Naive thymus-derived CD4-positive, alpha-beta T cell (primary cell): ENCODE measurements at regions of chr3 and their contacts with region 1.

Region 1: DNA sequence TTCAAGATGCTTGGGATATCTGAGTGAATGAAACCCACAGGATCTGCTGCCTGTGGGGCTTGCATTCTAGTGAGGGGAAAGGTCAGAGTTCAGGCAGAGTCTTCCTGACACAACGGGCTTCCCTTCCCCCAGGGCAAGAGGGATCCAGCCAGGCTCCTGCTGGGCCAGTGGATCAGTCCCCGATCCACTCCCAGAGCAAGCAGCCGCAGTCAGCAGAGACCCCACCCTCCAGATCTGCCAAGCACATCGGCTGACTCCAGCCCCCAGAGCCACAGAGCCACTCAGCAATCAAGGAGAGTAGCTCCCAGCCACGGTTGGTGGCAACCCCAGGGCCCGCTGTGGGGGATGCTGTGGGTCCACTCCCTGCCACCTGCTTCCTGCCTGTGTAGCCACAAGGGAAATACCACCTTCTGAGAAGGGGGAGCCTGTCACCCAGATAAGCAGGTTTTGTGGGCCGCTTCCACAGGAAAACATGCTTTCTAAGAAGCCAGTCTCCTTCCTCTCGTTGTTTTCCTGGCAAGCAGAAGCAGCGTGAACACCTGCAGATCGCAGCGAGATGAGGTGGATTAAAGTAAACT is 44.9 kb downstream of the CPN2 start:
- DNase-seq: peak in 8 of 9 donors; percentile 49 to 75 (median 68)
- ATAC-seq: peak; percentile 81
- H3K4me3 ChIP-seq: peak overlapping the region; percentile 43
- H3K4me3 Mint-ChIP-seq: peak overlapping the region; percentile 66 to 82 (median 79)
- H3K27ac ChIP-seq: peak overlapping the region; percentile 60
- H3K27ac Mint-ChIP-seq: peak overlapping the region; percentile 71 to 93 (median 85)
- H3K4me1 ChIP-seq: peaks cover 23 to 27% of the 10 kb centered on the region in 2 donors
- H3K4me1 Mint-ChIP-seq: peaks cover 12 to 65% (median 40%) of the 10 kb centered on the region in 7 donors
- H3K27me3 ChIP-seq: no peaks in the 10 kb centered on the region
- H3K27me3 Mint-ChIP-seq: no peaks in the 10 kb centered on the region

Region 2: GRCh38 chr3:192892981-192893700 is 1413.1 kb before region 1 on chr3:
- CTCF ChIA-PET with region 1: no interaction called
- POLR2A ChIA-PET with region 1: no interaction called
- intact Hi-C with region 1: loop called in 1 of 2 experiments (anchors 5 kb)
- DNase-seq: peak in 8 of 9 donors; percentile 20 to 68 (median 41)
- ATAC-seq: peak; percentile 89
- H3K4me3 ChIP-seq: peak overlapping the region; percentile 29
- H3K4me3 Mint-ChIP-seq: peak overlapping the region; percentile 39 to 87 (median 74)
- H3K27ac ChIP-seq: peak overlapping the region; percentile 73
- H3K27ac Mint-ChIP-seq: peak overlapping the region; percentile 77 to 95 (median 91)
- H3K4me1 ChIP-seq: peaks cover 4 to 21% of the 10 kb centered on the region in 2 donors
- H3K4me1 Mint-ChIP-seq: peaks cover 15 to 91% (median 46%) of the 10 kb centered on the region in 7 donors
- H3K27me3 ChIP-seq: no peaks in the 10 kb centered on the region
- H3K27me3 Mint-ChIP-seq: peaks cover 0 to 20% (median 3%) of the 10 kb centered on the region in 5 donors

Region 3: GRCh38 chr3:193592944-193593667 is 713.1 kb before region 1 on chr3 and contains the start of gene OPA1:
- CTCF ChIA-PET with region 1: no interaction called
- POLR2A ChIA-PET with region 1: no interaction called
- intact Hi-C with region 1: loop called in 1 of 2 experiments (anchors 5 kb)
- DNase-seq: peak; percentile 73 to 91 (median 80)
- ATAC-seq: peak; percentile 96
- H3K4me3 ChIP-seq: peak within 1 kb of the TSS; percentile 78
- H3K4me3 Mint-ChIP-seq: peak within 1 kb of the TSS; percentile 93 to 98 (median 96)
- H3K27ac ChIP-seq: peak within 1 kb of the TSS; percentile 82
- H3K27ac Mint-ChIP-seq: peak within 1 kb of the TSS; percentile 92 to 98 (median 95)
- H3K4me1 ChIP-seq: peaks cover 18 to 20% of the 10 kb centered on the region in 2 donors
- H3K4me1 Mint-ChIP-seq: peaks cover 40 to 70% (median 59%) of the 10 kb centered on the region in 7 donors
- H3K27me3 ChIP-seq: no peaks in the 10 kb centered on the region
- H3K27me3 Mint-ChIP-seq: no peaks in the 10 kb centered on the region
- total RNA-seq, gene OPA1: 50.7 to 70.0 (median 59.4) TPM

Region 4: DNA sequence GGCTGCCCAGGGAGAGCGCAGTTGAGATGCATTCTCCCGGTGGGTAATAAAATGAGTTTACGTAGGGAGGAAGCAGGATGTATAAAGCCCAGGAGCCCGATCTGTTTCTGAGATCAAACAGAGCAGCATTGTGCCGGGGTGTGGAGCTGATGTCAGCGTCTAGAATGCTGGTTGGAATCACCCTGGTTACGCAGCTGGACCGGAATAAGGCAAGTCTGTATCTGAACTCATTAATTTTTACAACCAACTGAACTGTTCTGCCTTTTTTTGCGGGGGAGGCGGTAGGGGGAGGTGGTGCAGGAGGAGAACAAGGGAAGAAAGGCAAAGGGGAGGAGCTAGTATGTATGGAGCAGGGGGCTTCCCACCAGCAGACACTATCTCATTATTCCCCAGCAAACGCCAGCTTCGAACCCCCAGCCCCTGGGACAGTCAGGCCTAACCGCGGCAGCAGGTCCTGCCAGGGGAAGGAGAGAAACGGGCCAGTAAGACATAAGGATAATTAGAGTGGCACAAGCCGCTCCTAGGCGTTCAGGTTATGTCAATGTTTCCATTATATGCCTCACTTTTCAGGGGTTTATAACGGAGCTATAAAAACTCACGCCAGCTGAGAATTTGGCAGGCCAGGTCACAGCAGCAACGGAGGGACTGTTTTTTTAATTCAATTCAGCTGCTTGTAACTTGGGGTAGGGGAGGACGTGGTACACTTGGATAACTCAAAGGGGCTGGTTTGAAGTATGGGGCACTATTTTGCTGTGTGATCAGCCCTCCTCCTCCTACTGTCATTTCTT is 345.5 kb before region 1 on chr3:
- CTCF ChIA-PET with region 1: no interaction called
- POLR2A ChIA-PET with region 1: no interaction called
- intact Hi-C with region 1: loop called in 1 of 2 experiments (anchors 5 kb)
- DNase-seq: no peak
- ATAC-seq: no peak
- H3K4me3 ChIP-seq: no peak overlapping the region
- H3K4me3 Mint-ChIP-seq: no peak overlapping the region
- H3K27ac ChIP-seq: no peak overlapping the region
- H3K27ac Mint-ChIP-seq: no peak overlapping the region
- H3K4me1 ChIP-seq: no peaks in the 10 kb centered on the region
- H3K4me1 Mint-ChIP-seq: peaks cover 0 to 30% (median 0%) of the 10 kb centered on the region in 7 donors
- H3K27me3 ChIP-seq: no peaks in the 10 kb centered on the region
- H3K27me3 Mint-ChIP-seq: peaks cover 28 to 53% (median 36%) of the 10 kb centered on the region in 5 donors

Region 5: GRCh38 chr3:194112120-194113106 is 193.8 kb before region 1 on chr3:
- CTCF ChIA-PET with region 1: no interaction called
- POLR2A ChIA-PET with region 1: no interaction called
- intact Hi-C with region 1: no loop called
- DNase-seq: no peak
- ATAC-seq: no peak
- H3K4me3 ChIP-seq: no peak overlapping the region
- H3K4me3 Mint-ChIP-seq: no peak overlapping the region
- H3K27ac ChIP-seq: no peak overlapping the region
- H3K27ac Mint-ChIP-seq: no peak overlapping the region
- H3K4me1 ChIP-seq: no peaks in the 10 kb centered on the region
- H3K4me1 Mint-ChIP-seq: peaks cover 0 to 3% (median 0%) of the 10 kb centered on the region in 7 donors
- H3K27me3 ChIP-seq: no peaks in the 10 kb centered on the region
- H3K27me3 Mint-ChIP-seq: peaks cover 0 to 36% (median 0%) of the 10 kb centered on the region in 5 donors

Region 6: GRCh38 chr3:194204042-194204987 is 101.9 kb before region 1 on chr3:
- CTCF ChIA-PET with region 1: no interaction called
- POLR2A ChIA-PET with region 1: no interaction called
- intact Hi-C with region 1: loop called (anchors 5 to 10 kb)
- DNase-seq: peak in 4 of 9 donors; percentile 4 to 38 (median 12)
- ATAC-seq: peak; percentile 52
- H3K4me3 ChIP-seq: peak overlapping the region; percentile 53
- H3K4me3 Mint-ChIP-seq: peak overlapping the region; percentile 85 to 95 (median 90)
- H3K27ac ChIP-seq: peak overlapping the region; percentile 18
- H3K27ac Mint-ChIP-seq: peak overlapping the region in 8 of 9 donors; percentile 48 to 92 (median 74)
- H3K4me1 ChIP-seq: peaks cover 0 to 9% of the 10 kb centered on the region in 2 donors
- H3K4me1 Mint-ChIP-seq: peaks cover 10 to 39% (median 30%) of the 10 kb centered on the region in 7 donors
- H3K27me3 ChIP-seq: peaks cover 0 to 6% of the 10 kb centered on the region in 2 donors
- H3K27me3 Mint-ChIP-seq: peaks cover 0 to 34% (median 17%) of the 10 kb centered on the region in 5 donors

Region 7: DNA sequence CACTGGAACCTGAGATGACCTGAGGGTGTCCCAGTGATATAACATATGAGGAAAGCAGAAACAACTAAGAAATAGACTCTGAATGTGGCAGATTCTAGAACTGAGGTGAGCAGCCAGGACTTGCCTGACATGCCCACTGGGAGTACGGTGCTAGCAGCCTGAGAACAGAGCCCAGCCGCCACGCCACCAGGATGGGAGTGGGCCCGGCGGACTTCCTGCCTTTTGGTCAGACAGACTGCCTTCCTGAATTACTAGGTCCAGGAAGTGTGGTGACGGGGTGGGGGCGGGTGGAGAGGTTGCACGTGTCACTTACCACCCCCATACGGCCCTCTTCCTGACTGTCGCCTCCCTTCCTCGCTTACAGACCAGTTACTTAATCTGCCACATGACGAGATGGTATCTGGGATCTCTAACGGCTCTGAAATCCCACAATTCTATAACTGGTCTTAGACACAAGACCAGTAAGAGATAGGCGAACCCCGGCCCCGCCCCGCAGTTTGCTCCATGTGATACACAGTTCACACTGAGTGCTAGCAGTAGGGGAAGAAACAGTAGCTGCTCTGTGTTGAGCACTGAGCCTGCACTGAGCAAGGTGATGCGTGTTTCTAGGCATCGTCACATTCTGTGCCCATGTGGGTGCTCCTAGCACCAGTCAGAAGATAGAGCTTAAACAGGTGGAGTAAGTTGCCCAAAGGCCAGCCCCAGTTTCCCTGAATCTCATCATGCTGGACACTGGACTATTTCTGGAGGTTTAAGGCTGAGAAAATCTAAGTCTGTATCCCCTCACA is 50.8 kb before region 1 on chr3:
- CTCF ChIA-PET with region 1: no interaction called
- POLR2A ChIA-PET with region 1: no interaction called
- intact Hi-C with region 1: loop called (anchors 2 kb)
- DNase-seq: peak in 7 of 9 donors; percentile 2 to 41 (median 36)
- ATAC-seq: peak; percentile 88
- H3K4me3 ChIP-seq: peak overlapping the region; percentile 42
- H3K4me3 Mint-ChIP-seq: peak overlapping the region; percentile 65 to 88 (median 82)
- H3K27ac ChIP-seq: peak overlapping the region; percentile 56
- H3K27ac Mint-ChIP-seq: peak overlapping the region; percentile 71 to 93 (median 88)
- H3K4me1 ChIP-seq: peaks cover 0 to 6% of the 10 kb centered on the region in 2 donors
- H3K4me1 Mint-ChIP-seq: peaks cover 13 to 37% (median 25%) of the 10 kb centered on the region in 7 donors
- H3K27me3 ChIP-seq: no peaks in the 10 kb centered on the region
- H3K27me3 Mint-ChIP-seq: peaks cover 0 to 7% (median 0%) of the 10 kb centered on the region in 5 donors

Region 8: DNA sequence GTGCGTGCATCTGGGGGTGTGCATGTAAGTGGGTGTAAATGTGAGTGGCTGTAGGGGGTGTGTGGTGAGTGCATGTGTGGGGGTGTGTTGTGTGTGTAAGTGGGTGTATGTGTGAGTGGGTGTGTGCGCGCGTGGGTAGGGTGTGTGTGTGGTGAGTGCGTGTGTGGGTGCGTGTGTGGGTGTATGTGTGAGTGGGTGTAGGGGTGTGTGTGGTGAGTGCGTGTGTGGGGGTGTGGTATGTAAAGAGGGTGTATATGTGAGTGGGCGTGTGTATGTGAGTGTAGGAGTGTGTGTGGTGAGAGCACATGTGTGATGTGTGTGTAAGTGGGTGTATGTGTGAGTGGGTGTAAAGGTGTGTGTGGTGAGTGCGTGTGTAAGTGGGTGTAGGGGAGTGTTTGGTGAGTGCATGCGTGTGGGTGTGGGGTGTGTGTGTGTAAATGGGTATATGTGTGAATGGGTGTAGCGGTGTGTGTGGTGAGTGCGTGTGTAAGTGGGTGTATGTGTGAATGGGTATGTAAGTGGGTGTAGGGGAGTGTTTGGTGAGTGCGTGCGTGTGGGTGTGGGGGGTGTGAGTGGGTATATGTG is 45.8 kb after region 1 on chr3:
- CTCF ChIA-PET with region 1: no interaction called
- POLR2A ChIA-PET with region 1: no interaction called
- intact Hi-C with region 1: no loop called
- DNase-seq: no peak
- ATAC-seq: peak; percentile 26
- H3K4me3 ChIP-seq: no peak overlapping the region
- H3K4me3 Mint-ChIP-seq: no peak overlapping the region
- H3K27ac ChIP-seq: no peak overlapping the region
- H3K27ac Mint-ChIP-seq: no peak overlapping the region
- H3K4me1 ChIP-seq: no peaks in the 10 kb centered on the region
- H3K4me1 Mint-ChIP-seq: peaks cover 0 to 16% (median 4%) of the 10 kb centered on the region in 7 donors
- H3K27me3 ChIP-seq: no peaks in the 10 kb centered on the region
- H3K27me3 Mint-ChIP-seq: no peaks in the 10 kb centered on the region